GM13976 (cell line): ENCODE measurements at regions of chr1 and their contacts with region 1.

Region 1: GRCh38 chr1:174258148-174258550 is 98.8 kb downstream of the RABGAP1L start:
- DNase-seq: peak; percentile 32
- CTCF ChIP-seq: peak; percentile 29

Region 2: DNA sequence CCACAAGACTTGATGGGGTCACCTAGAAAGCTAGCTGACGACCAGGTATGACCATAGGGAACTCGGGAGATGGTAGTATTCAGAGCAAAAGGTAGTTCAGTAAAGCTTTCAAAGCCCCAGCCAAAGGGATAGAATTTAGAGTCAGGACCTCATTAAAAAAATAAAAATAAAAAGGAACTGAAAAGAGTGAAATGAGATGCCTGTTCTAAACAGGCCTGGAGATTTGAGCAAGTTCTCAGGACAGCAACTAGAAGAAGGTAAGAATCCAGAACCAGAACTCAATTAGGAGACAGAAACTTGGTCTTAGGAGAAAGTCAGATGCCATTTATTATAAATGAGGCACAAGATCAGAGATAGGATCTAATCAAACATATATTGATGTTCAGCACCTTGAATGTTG is 476.1 kb after region 1 on chr1:
- in situ Hi-C with region 1: loop called (anchors 5 kb)
- DNase-seq: no peak
- CTCF ChIP-seq: no peak

Region 3: GRCh38 chr1:174999216-174999925 is 741.2 kb after region 1 on chr1:
- in situ Hi-C with region 1: loop called (anchors 10 kb)
- DNase-seq: peak; percentile 96
- CTCF ChIP-seq: no peak